ENCODE measurements at regions of chr2 and their contacts with region 1.

Region 1: DNA sequence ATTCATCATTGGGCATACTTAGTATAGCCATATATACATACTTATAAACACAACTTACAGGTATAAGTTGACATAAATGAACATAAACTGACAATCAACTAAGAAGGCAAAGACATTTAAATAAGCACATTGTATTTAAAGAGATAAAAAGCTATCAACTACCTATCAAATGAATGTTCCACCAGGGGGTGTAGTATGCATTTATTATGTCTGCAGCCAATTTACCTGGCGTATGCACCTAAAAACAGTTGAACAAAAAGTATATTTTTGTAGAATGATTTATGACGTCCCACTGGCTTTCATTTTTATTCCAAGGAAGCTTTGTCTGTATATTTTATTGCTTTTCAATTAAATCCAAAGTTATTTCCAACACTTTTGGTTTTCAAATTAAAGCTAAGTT is 323.5 kb downstream of the AFF3 start:
- DNase-seq: peak; percentile 57
- H3K4me3 ChIP-seq: no peak overlapping the region
- H3K27ac ChIP-seq: no peak overlapping the region
- H3K4me1 ChIP-seq: peaks cover 3% of the 10 kb centered on the region
- H3K27me3 ChIP-seq: peaks cover 8 to 10% of the 10 kb centered on the region in 2 experiments
- CTCF ChIP-seq: peak; percentile 13 to 25
- POLR2A ChIP-seq: no peak

Region 2: DNA sequence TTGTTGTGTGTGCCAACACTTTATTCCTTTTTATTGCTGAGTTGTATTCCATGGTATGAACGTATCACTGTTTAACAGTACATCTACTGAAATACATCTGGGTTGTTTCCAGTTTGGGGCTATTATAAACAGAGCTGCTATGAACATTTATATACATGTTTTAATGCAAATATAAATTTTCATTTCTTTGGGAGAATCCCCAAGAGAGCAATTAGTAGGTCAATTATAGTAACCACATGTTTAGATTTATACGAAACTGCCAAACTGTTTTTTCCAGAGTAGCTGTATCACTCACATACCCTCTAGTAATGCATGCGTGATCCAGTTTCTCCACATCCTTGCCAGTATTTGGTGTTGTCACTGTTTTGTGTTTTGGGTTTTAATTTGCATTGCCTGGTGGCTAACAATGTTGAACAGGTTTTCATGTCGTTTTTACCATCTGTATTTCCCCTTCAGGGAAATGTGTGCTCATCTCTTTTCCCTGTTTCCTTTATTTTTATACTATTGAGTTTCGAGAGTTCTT is 1904.1 kb before region 1 on chr2:
- CTCF ChIA-PET with region 1: no interaction called
- POLR2A ChIA-PET with region 1: no interaction called
- dilution Hi-C with region 1: no loop called
- intact Hi-C with region 1: no loop called
- DNase-seq: no peak
- H3K4me3 ChIP-seq: no peak overlapping the region
- H3K27ac ChIP-seq: no peak overlapping the region
- H3K4me1 ChIP-seq: no peaks in the 10 kb centered on the region
- H3K27me3 ChIP-seq: no peaks in the 10 kb centered on the region
- CTCF ChIP-seq: no peak
- POLR2A ChIP-seq: no peak

Region 3: GRCh38 chr2:99748344-99748743 is 70.5 kb before region 1 on chr2:
- CTCF ChIA-PET with region 1: no interaction called
- POLR2A ChIA-PET with region 1: no interaction called
- dilution Hi-C with region 1: no loop called
- intact Hi-C with region 1: no loop called
- DNase-seq: no peak
- H3K4me3 ChIP-seq: no peak overlapping the region
- H3K27ac ChIP-seq: no peak overlapping the region
- H3K4me1 ChIP-seq: no peaks in the 10 kb centered on the region
- H3K27me3 ChIP-seq: no peaks in the 10 kb centered on the region
- CTCF ChIP-seq: no peak
- POLR2A ChIP-seq: no peak

Region 4: GRCh38 chr2:99841749-99842148 is 22.9 kb after region 1 on chr2:
- CTCF ChIA-PET with region 1: interaction called, 14 read pairs
- POLR2A ChIA-PET with region 1: no interaction called
- dilution Hi-C with region 1: no loop called
- intact Hi-C with region 1: no loop called
- DNase-seq: no peak
- H3K4me3 ChIP-seq: no peak overlapping the region
- H3K27ac ChIP-seq: no peak overlapping the region
- H3K4me1 ChIP-seq: no peaks in the 10 kb centered on the region
- H3K27me3 ChIP-seq: no peaks in the 10 kb centered on the region
- CTCF ChIP-seq: no peak
- POLR2A ChIP-seq: no peak

Region 5: DNA sequence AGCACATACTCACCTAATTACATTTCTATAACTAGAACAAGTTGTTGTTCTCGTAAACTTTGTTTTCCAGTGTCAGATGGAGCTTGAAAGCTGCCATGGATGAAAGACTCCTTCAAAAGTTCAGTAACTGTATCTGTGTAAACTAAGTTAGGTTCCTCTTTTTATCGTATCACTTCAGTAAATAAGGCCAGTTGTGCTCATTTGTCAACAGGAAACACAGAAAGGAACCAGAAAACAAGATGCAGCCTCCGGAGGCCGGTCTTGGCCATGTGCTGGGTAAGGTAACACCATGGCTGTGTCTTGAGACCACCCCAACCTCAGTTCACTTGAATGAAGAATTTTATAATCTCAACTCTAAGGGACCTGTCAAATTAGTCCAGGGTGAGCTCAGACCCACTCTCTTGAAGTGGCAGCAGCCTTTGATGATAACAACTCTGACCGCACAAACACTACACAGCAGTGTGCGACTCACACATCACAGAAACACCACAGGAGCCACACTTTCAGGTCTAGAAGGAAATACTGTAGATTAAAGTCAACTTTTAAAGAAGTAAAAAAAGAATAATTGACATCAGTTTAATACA is 109.7 kb after region 1 on chr2:
- CTCF ChIA-PET with region 1: interaction called, 10 read pairs
- POLR2A ChIA-PET with region 1: no interaction called
- dilution Hi-C with region 1: no loop called
- intact Hi-C with region 1: no loop called
- DNase-seq: no peak
- H3K4me3 ChIP-seq: no peak overlapping the region
- H3K27ac ChIP-seq: no peak overlapping the region
- H3K4me1 ChIP-seq: no peaks in the 10 kb centered on the region
- H3K27me3 ChIP-seq: peaks cover 0 to 3% of the 10 kb centered on the region in 2 experiments
- CTCF ChIP-seq: no peak
- POLR2A ChIP-seq: no peak

Region 6: GRCh38 chr2:100067784-100068183 is 248.9 kb after region 1 on chr2:
- CTCF ChIA-PET with region 1: interaction called, 10 read pairs
- POLR2A ChIA-PET with region 1: no interaction called
- dilution Hi-C with region 1: no loop called
- intact Hi-C with region 1: no loop called
- DNase-seq: no peak
- H3K4me3 ChIP-seq: no peak overlapping the region
- H3K27ac ChIP-seq: no peak overlapping the region
- H3K4me1 ChIP-seq: no peaks in the 10 kb centered on the region
- H3K27me3 ChIP-seq: peaks cover 2 to 6% of the 10 kb centered on the region in 2 experiments
- CTCF ChIP-seq: no peak
- POLR2A ChIP-seq: no peak

Region 7: DNA sequence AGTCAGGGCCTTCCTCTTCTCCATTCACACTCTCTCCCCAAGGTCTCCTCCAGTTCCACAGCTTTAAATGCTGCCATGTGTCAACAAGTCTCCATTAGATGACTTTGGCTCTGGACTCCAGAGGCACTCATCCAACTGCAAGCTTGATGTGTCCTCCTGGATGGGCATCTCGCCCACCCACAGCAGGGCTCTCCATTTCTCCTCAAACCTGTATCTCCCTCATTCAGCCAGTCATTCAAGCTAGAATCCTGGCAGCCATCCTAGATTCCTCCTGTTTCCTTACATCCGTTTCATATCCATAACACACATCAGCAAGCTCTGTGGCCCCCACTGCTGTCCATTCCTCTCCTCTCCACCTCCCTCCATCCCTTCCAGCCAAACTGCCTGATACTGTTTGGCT is 411.9 kb after region 1 on chr2:
- CTCF ChIA-PET with region 1: interaction called, 29 read pairs
- POLR2A ChIA-PET with region 1: no interaction called
- dilution Hi-C with region 1: no loop called
- intact Hi-C with region 1: no loop called
- DNase-seq: no peak
- H3K4me3 ChIP-seq: no peak overlapping the region
- H3K27ac ChIP-seq: no peak overlapping the region
- H3K4me1 ChIP-seq: no peaks in the 10 kb centered on the region
- H3K27me3 ChIP-seq: peaks cover 4 to 18% of the 10 kb centered on the region in 2 experiments
- CTCF ChIP-seq: no peak
- POLR2A ChIP-seq: no peak

Region 8: DNA sequence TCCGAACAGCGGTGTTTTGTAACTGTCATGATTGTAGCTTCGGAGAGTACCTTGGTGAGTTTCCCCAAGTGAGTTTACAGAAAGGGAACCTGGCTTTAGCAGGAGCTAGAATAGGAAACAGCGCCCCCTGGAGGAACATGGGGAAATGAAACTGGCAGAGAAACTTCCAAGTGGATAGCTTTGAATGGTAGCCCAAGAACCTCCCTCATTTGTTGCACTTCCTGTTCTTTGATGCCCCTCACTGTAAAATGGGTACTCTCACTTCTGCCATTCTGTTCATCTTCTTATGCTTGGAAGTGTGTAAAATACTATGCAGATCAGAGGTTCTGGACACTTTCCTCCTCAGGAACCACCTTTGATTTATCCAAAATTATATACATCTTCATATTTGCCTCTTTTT is 562.4 kb after region 1 on chr2:
- CTCF ChIA-PET with region 1: interaction called, 13 read pairs
- POLR2A ChIA-PET with region 1: no interaction called
- dilution Hi-C with region 1: no loop called
- intact Hi-C with region 1: loop called (anchors 10 kb)
- DNase-seq: peak; percentile 81
- H3K4me3 ChIP-seq: no peak overlapping the region
- H3K27ac ChIP-seq: no peak overlapping the region
- H3K4me1 ChIP-seq: no peaks in the 10 kb centered on the region
- H3K27me3 ChIP-seq: peaks cover 4 to 6% of the 10 kb centered on the region in 2 experiments
- CTCF ChIP-seq: peak; percentile 81 to 87
- POLR2A ChIP-seq: no peak

Measured in endothelial cell of umbilical vein (primary cell).